ENCODE measurements at regions of chr9 and their contacts with region 1.

Region 1: GRCh38 chr9:124040935-124041816 is 29.6 kb downstream of the LHX2 start:
- DNase-seq: peak in 3 of 5 donors; percentile 24 to 69 (median 68)
- H3K4me3 ChIP-seq: peak overlapping the region; percentile 16
- H3K27ac ChIP-seq: no peak overlapping the region
- H3K4me1 ChIP-seq: peaks cover 8% of the 10 kb centered on the region
- H3K27me3 ChIP-seq: no peaks in the 10 kb centered on the region
- CTCF ChIP-seq: peak; percentile 44 to 69 (median 50)
- EP300 ChIP-seq: no peak
- POLR2A ChIP-seq: no peak

Region 2: GRCh38 chr9:123544007-123544827 is 497.0 kb before region 1 on chr9:
- intact Hi-C with region 1: loop called in 2 of 4 experiments (anchors 5 to 10 kb)
- DNase-seq: peak in 1 of 5 donors; percentile 31
- H3K4me3 ChIP-seq: no peak overlapping the region
- H3K27ac ChIP-seq: no peak overlapping the region
- H3K4me1 ChIP-seq: no peaks in the 10 kb centered on the region
- H3K27me3 ChIP-seq: no peaks in the 10 kb centered on the region
- CTCF ChIP-seq: peak; percentile 13 to 81 (median 64)
- EP300 ChIP-seq: no peak
- POLR2A ChIP-seq: no peak

Region 3: GRCh38 chr9:123724211-123724796 is 316.9 kb before region 1 on chr9:
- intact Hi-C with region 1: no loop called
- DNase-seq: no peak
- H3K4me3 ChIP-seq: no peak overlapping the region
- H3K27ac ChIP-seq: no peak overlapping the region
- H3K4me1 ChIP-seq: no peaks in the 10 kb centered on the region
- H3K27me3 ChIP-seq: no peaks in the 10 kb centered on the region
- CTCF ChIP-seq: no peak
- EP300 ChIP-seq: no peak
- POLR2A ChIP-seq: no peak

Region 4: DNA sequence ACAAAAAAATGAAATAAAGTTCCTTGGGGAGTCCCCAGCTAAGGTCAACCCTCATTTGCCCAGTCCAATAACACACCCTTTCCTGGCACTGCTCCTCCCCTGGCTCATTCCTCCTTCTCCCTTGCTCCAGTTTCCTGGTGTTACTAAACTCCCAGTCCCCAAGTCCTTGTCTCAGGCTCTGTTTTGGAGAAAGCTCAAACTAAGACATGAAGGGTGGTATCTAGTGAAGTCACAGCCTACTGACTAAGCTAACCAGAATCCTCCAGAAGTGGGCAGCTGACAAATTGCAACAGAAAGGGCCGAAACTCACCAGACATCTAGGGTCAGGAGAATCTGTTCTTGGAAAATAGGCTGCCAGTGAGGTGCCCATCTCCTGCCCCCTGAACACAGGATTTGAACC is 97.8 kb after region 1 on chr9:
- intact Hi-C with region 1: no loop called
- DNase-seq: no peak
- H3K4me3 ChIP-seq: no peak overlapping the region
- H3K27ac ChIP-seq: no peak overlapping the region
- H3K4me1 ChIP-seq: no peaks in the 10 kb centered on the region
- H3K27me3 ChIP-seq: no peaks in the 10 kb centered on the region
- CTCF ChIP-seq: no peak
- EP300 ChIP-seq: no peak
- POLR2A ChIP-seq: no peak